A549 (cell line): ENCODE measurements at regions of chr9 and their contacts with region 1.

Region 1: DNA sequence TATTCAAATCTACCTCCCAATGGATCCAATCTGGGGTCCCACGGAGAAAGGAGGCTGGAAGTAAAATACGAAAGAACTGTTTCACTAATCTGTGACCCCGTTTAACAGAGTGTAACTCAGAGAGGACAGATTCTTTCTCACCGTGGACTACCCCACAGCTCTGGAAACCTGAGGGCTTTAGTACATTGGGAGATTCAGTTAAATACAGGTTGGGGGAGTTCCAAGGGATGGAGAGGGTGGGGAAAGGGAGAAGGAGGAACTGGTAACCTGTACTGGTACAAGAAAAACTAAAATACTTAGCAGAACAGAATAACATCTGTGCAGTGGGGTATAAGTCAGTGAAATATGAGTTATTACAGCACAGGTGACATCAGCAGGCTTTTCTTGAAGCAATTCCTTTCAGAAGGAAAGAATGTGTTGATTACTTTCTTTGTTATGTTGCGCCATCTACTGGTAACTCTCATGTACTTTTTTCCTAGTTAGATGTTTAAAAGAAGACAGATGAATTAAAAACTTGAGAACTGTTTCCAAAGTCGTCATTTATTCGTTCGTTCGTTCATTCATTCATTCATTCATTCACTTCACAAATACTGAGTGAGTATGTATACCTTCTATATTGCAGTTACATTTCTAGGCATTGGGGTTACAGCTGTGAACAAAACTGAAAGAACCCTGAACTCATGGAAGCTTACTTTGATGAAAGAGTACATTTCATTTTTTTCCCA is 30.0 kb upstream of the STOM start:
- DNase-seq: peak; percentile 40 to 80
- ATAC-seq: peak; percentile 82 to 89
- H3K4me3 ChIP-seq: no peak overlapping the region
- H3K27ac ChIP-seq: peak overlapping the region; percentile 39 to 55; a peak in 5 of 6 replicates
- H3K4me1 ChIP-seq: peaks cover 8% of the 10 kb centered on the region; the same call in 2 of the 3 replicates
- CTCF ChIP-seq: peak; percentile 86
- EP300 ChIP-seq: no peak
- POLR2A ChIP-seq: no peak
- RAD21 ChIP-seq: peak; percentile 89 to 92

Region 2: DNA sequence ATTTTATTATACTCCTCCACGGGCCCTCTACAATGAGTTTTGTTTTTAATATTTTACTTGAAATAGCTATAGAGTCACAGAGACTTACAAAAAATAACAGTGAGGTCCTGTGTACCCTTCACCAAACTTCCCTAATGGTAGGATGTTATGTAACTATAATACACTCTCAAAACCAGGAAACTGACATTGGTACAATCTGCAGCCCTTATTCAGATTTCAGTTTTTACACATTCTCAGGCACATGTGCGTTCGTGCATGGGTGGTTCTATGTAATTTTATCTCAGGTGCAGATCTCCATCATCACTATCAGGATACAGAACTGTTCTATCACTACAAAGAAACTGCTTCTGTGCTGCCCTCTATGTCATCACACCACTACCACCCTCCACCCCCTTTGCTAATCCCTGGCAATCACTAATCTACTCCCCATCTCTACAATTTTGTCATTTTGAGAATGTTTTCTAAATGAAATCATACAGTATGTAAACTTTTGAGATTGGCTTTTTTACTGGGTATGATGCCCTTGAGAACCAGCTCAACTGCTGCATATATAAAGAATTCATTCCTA is 214.8 kb before region 1 on chr9:
- CTCF ChIA-PET with region 1: no interaction called
- POLR2A ChIA-PET with region 1: no interaction called
- DNase-seq: no peak
- ATAC-seq: peak in 1 of 2 experiments; percentile 22; a peak in 1 of 6 replicates
- H3K4me3 ChIP-seq: no peak overlapping the region
- H3K27ac ChIP-seq: no peak overlapping the region
- H3K4me1 ChIP-seq: peaks cover 42% of the 10 kb centered on the region
- CTCF ChIP-seq: no peak
- EP300 ChIP-seq: no peak
- POLR2A ChIP-seq: no peak
- RAD21 ChIP-seq: no peak

Region 3: DNA sequence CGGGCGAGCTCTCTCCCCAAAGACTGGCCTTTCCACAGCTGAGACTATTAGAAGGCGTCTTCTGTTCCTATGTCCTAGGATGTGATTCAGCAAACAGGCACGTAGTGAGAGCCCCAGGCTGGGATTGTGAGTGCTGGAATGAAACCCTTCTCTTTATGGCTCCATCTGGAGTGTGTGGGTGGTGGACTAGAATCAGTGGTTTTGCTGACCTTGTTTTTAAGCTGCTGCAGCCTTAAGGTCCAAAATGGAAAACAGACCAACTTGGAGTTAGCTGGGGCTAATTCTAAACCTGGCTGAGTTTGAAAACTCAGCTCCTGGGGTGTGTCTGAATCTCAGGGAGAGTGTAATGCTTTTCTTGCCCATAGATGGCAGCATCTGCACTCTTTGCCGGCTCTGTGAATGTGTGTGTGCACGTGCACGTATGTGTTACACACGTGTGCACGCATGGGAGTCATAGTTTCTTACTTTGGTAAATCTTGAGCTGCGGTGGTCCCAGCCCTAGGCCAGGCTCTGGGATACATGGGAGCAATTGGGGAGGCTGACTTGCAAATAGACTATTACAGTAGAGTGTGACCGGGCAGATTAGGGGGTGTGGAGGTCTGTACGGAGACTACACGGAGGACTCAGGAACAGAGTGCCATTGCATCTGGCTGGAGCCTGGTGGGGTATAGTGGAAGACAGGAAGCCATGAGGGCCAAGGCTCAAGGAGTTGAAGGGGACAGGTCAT is 121.3 kb before region 1 on chr9:
- CTCF ChIA-PET with region 1: interaction called, 20 read pairs
- POLR2A ChIA-PET with region 1: no interaction called
- DNase-seq: peak in 1 of 2 experiments; percentile 75
- ATAC-seq: peak; percentile 75 to 87
- H3K4me3 ChIP-seq: no peak overlapping the region
- H3K27ac ChIP-seq: peak overlapping the region; percentile 58 to 83
- H3K4me1 ChIP-seq: peaks cover 57% of the 10 kb centered on the region
- CTCF ChIP-seq: peak; percentile 88
- EP300 ChIP-seq: no peak
- POLR2A ChIP-seq: no peak
- RAD21 ChIP-seq: peak; percentile 80 to 85

Region 4: DNA sequence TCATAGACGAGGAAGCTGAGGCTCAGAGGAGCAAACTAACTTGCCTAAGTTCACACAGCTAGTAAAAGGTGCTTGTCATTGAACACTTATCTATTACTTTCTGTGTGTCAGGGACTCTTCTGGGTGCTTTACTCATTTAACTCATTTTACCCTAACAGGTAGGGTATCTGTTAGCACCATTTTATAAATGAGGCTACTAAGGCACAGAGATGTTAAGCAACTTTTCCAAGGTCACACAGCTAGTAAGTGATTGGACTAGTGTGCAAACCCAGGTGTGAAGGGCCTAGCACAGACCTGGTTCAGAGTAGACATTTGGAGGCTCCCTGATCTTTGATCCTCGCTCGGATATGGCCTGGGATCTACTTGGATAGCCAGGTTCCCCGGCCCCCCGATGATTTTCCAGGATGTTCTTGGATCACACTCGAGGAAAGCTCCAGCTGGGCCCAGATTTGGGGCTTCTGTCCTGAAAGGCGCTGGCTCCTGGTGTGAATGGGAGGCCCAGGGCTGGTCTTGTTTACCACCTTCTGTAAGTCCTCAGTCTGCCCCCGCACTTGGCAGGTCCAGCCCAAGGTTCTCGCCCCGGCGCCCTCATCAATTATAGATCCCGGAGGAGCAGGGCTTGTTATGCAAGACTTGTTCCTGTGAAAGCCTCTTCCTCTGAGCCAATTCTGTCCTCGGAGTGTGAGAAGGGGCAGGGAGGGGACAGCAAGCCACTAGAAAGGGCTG is 94.6 kb before region 1 on chr9:
- CTCF ChIA-PET with region 1: interaction called, 44 read pairs
- POLR2A ChIA-PET with region 1: no interaction called
- DNase-seq: no peak
- ATAC-seq: no peak
- H3K4me3 ChIP-seq: no peak overlapping the region
- H3K27ac ChIP-seq: peak overlapping the region in 1 of 2 experiments; percentile 30; a peak in 2 of 6 replicates
- H3K4me1 ChIP-seq: peaks cover 20% of the 10 kb centered on the region
- CTCF ChIP-seq: no peak
- EP300 ChIP-seq: no peak
- POLR2A ChIP-seq: no peak
- RAD21 ChIP-seq: no peak

Region 5: GRCh38 chr9:121362813-121363621 is 37.0 kb before region 1 on chr9:
- CTCF ChIA-PET with region 1: interaction called, 13 read pairs
- POLR2A ChIA-PET with region 1: no interaction called
- DNase-seq: peak in 1 of 2 experiments; percentile 48
- ATAC-seq: peak; percentile 62 to 79; a peak in 5 of 6 replicates
- H3K4me3 ChIP-seq: no peak overlapping the region; the same call in 2 of the 3 replicates
- H3K27ac ChIP-seq: peak overlapping the region; percentile 55 to 77; a peak in 5 of 6 replicates
- H3K4me1 ChIP-seq: peaks cover 88% of the 10 kb centered on the region
- CTCF ChIP-seq: no peak
- EP300 ChIP-seq: no peak
- POLR2A ChIP-seq: no peak
- RAD21 ChIP-seq: no peak

Region 6: GRCh38 chr9:121383715-121384114 is 16.3 kb before region 1 on chr9:
- CTCF ChIA-PET with region 1: interaction called, 47 read pairs
- POLR2A ChIA-PET with region 1: no interaction called
- DNase-seq: no peak
- ATAC-seq: no peak
- H3K4me3 ChIP-seq: no peak overlapping the region
- H3K27ac ChIP-seq: no peak overlapping the region
- H3K4me1 ChIP-seq: no peaks in the 10 kb centered on the region
- CTCF ChIP-seq: no peak
- EP300 ChIP-seq: no peak
- POLR2A ChIP-seq: no peak
- RAD21 ChIP-seq: no peak